ENCODE measurements at regions of chr12 and their contacts with region 1.

Region 1: GRCh38 chr12:7219599-7220243 is 30.2 kb downstream of the PEX5 start:
- DNase-seq: peak; percentile 68 to 91 (median 78)
- H3K4me3 ChIP-seq: no peak overlapping the region
- H3K27ac ChIP-seq: no peak overlapping the region
- H3K4me1 ChIP-seq: no peaks in the 10 kb centered on the region
- H3K27me3 ChIP-seq: no peaks in the 10 kb centered on the region
- CTCF ChIP-seq: peak; percentile 69 to 94 (median 89)
- POLR2A ChIP-seq: no peak

Region 2: GRCh38 chr12:7460375-7461259 is 240.9 kb after region 1 on chr12:
- intact Hi-C with region 1: loop called in 1 of 2 experiments (anchors 2 kb)
- DNase-seq: peak in 4 of 7 donors; percentile 37 to 62 (median 56)
- H3K4me3 ChIP-seq: no peak overlapping the region
- H3K27ac ChIP-seq: no peak overlapping the region
- H3K4me1 ChIP-seq: no peaks in the 10 kb centered on the region
- H3K27me3 ChIP-seq: no peaks in the 10 kb centered on the region
- CTCF ChIP-seq: peak; percentile 41 to 84 (median 72)
- POLR2A ChIP-seq: no peak

Region 3: GRCh38 chr12:7638760-7639555 is 419.2 kb after region 1 on chr12:
- intact Hi-C with region 1: loop called (anchors 2 to 10 kb)
- DNase-seq: peak; percentile 77 to 92 (median 85)
- H3K4me3 ChIP-seq: peak overlapping the region in 1 of 4 donors; percentile 57
- H3K27ac ChIP-seq: peak overlapping the region in 2 of 5 donors; percentile 38 to 49
- H3K4me1 ChIP-seq: peaks cover 0 to 7% of the 10 kb centered on the region in 2 donors
- H3K27me3 ChIP-seq: no peaks in the 10 kb centered on the region
- CTCF ChIP-seq: peak; percentile 92 to 97 (median 96)
- POLR2A ChIP-seq: no peak

Region 4: DNA sequence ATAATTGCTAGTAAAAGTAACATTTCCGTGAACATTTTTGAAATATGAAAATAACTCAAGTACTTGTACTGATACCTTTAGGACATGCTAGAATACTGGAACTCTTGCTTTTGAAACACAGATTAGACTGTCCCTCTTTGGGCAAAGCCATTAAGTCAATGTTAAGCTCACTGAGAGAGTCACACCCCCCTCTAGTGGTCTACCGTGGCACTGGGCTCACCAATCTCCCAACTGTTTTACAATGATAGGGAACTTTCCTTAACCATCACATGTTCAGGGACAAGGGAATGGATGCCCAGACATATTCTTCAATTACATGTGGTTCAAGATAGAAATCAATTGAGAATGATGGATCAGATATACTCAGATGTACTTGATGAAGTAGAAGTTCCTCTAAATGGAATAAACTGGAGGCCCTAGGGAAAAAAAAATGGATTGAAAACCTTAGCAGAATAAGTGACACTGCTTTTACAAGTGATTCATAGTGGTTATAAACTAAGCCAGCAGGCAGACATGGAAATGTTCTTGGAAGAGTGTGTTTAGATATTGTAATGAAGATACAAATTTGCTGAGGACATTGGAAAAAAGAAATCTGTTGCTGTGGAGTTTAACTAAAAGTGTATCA is 587.3 kb after region 1 on chr12:
- intact Hi-C with region 1: loop called in 1 of 2 experiments (anchors 10 kb)
- DNase-seq: peak; percentile 76 to 93 (median 82)
- H3K4me3 ChIP-seq: no peak overlapping the region
- H3K27ac ChIP-seq: no peak overlapping the region
- H3K4me1 ChIP-seq: peaks cover 0 to 8% of the 10 kb centered on the region in 2 donors
- H3K27me3 ChIP-seq: no peaks in the 10 kb centered on the region
- CTCF ChIP-seq: peak; percentile 78 to 96 (median 90)
- POLR2A ChIP-seq: no peak

Measured in adrenal gland (tissue), 19 donors.